ENCODE measurements at regions of chr2 and their contacts with region 1.

Region 1: DNA sequence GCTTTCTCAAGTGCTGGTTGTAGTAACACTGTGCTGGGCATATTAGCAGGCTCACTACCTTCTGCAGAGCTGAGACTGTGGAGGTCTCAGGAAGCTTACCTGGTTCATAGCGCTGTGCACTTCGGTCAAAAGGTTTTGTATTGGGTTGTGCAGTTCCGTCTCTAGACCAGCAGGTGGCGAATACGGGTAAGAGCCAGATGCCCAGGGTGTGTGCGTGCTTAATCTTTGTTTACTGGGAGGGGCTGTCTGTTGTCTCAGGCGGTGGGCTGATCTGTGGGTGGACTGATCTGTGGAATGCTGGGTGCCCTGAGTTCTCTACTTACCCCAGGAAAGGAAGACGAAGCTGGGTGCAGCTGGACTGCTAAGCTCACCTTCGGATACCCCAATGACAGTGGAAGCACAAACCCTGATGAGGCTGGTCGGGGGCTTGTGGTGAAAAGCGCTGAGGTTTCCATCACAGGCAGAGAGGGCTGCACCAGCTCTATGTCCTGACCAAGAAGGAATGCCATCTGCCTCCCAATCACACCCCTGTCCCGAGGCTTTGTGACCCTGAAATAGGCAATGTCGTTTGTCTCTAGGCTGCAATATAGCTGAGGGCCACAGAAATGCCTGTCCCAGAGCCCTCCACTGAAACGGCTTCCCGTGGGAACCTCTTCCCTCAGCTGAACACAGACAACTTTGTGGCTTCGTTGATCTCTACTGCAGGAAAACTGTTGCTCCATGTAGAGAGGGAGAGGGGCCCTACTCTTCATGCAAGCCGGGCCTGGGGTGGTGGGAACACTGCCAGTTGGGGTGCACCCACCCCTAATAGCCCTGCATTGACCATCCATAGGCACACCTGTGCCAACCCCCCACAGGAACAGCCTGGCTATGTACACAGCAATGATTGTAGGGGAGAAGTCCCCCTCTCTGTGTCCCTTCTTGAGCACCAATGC is 45.9 kb upstream of the FAM117B start:
- DNase-seq: peak; percentile 51 to 70
- ATAC-seq: peak; percentile 86 to 96 (median 88)
- H3K4me3 ChIP-seq: peak overlapping the region; percentile 41
- H3K27ac ChIP-seq: no peak overlapping the region
- H3K4me1 ChIP-seq: peaks cover 3% of the 10 kb centered on the region
- H3K27me3 ChIP-seq: no peaks in the 10 kb centered on the region
- CTCF ChIP-seq: peak; percentile 92

Region 2: GRCh38 chr2:202736826-202737225 is 147.9 kb after region 1 on chr2:
- intact Hi-C with region 1: loop called in 1 of 2 experiments (anchors 10 kb)
- DNase-seq: no peak
- ATAC-seq: no peak
- H3K4me3 ChIP-seq: no peak overlapping the region
- H3K27ac ChIP-seq: no peak overlapping the region
- H3K4me1 ChIP-seq: no peaks in the 10 kb centered on the region
- H3K27me3 ChIP-seq: no peaks in the 10 kb centered on the region
- CTCF ChIP-seq: no peak

Region 3: DNA sequence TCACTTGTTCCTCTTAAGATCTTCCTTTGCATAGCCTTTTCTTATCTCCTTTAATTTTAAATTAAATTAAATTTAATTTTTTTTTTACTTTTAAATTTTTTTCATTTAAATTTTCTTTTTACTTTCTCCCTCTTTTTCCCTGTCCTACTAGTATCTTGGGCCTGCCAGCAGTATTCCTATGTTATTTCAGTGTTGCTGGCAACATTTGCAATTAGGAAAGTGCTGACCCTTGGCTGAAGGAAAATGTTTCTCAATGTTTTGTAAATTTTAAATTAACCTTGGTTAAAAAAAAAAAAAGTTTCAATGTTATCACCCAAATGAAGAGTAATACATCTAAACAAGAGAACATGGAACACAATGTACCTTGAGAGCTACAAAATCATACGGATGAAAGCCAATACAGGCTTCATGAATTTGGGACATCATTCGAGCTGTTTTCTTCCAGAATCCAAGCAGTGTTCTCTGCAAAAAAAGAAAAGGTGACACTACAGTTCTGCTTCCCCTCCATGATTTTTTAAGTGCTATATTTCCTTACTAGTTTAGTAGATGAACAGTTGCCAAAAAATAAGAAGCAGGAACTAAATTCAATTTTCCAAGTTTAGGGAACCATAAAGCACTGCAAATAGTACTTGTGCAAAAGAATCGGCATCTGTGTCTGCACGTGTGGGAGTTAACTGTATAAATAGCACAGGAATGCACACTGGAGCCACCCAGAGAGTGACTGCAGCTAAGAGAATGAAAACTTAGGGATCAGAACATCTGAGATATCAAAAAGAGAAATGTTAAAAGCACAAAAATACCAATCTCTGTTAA is 226.8 kb after region 1 on chr2:
- intact Hi-C with region 1: no loop called
- DNase-seq: no peak
- ATAC-seq: peak in 3 of 4 donors; percentile 17 to 74 (median 48)
- H3K4me3 ChIP-seq: no peak overlapping the region
- H3K27ac ChIP-seq: no peak overlapping the region
- H3K4me1 ChIP-seq: peaks cover 5% of the 10 kb centered on the region
- H3K27me3 ChIP-seq: no peaks in the 10 kb centered on the region
- CTCF ChIP-seq: no peak

Region 4: GRCh38 chr2:202870431-202871299 is 281.8 kb after region 1 on chr2:
- intact Hi-C with region 1: loop called in 1 of 2 experiments (anchors 10 kb)
- DNase-seq: peak; percentile 54 to 78
- ATAC-seq: peak; percentile 74 to 83 (median 76)
- H3K4me3 ChIP-seq: peak overlapping the region; percentile 86
- H3K27ac ChIP-seq: peak overlapping the region; percentile 77
- H3K4me1 ChIP-seq: peaks cover 5% of the 10 kb centered on the region
- H3K27me3 ChIP-seq: no peaks in the 10 kb centered on the region
- CTCF ChIP-seq: peak; percentile 14